ENCODE measurements at regions of chr1 and their contacts with region 1.

Region 1: DNA sequence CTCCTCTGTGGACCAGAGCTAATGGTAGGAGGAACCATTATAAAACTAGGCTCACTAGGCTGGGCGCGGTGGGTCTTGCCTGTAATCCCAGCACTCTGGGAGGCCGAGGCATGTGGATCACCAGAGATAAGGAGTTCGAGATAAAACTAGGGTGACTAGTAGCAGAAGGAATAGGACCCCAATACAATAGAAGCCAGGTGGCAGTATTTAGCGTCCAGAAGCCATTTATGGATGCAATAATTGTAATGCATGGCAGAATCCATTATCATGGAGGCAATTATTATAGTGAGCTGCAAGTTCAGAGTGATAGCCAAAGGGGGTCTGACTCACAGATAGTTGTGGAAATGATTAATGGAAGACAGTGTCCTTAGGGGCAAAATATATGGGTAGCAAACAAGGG is 144.0 kb downstream of the IER5 start:
- DNase-seq: peak; percentile 1
- CTCF ChIP-seq: no peak

Region 2: DNA sequence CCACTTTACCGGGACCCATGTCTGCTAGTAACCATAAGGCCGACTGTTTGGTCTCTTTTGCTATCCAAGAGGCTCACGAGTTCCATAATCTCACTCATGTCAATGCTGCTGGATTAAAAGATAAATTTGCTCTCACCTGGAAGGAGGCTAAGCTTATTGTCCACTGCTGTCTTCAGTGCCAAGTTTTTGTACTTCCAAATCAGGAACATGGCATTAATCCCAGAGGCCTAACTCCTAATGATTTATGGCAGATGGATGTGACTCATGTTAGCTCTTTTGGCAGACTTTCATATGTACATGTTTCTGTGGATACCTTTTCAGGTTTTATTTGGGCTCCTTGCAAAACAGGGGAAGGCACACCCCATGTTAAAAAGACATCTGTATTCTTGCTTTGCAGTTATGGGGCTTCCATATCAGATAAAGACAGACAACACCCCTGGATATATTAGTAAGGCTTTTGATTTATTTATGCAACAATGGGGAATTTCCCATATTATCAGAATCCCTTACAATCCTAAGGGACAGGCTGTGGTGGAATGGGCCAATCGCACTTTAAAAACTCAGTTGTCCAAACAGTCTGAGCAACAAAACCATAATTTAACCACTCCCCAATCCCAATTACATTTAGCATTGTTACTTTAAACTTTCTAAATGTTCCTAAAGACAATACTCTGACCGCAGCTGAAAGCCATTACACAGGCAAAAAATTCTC is 18.6 kb after region 1 on chr1:
- CTCF ChIA-PET with region 1: interaction called, 10 read pairs
- POLR2A ChIA-PET with region 1: no interaction called
- DNase-seq: no peak
- CTCF ChIP-seq: no peak

Measured in GM10248 (cell line).